Activated T-helper 1 cell treated with anti-CD3 and anti-CD28 coated beads, Interleukin-12 subunit alpha, Interleukin-12 subunit beta, Interleukin-2, Interleukin-4 antibody, amounts not matched to agents 30 ng/mL and 10 ng/mL and 1 ng/mL, durations not matched to agents 14 hours and 24 hours and 36 hours (primary cell): ENCODE measurements at regions of chr5 and their contacts with region 1.

Region 1: DNA sequence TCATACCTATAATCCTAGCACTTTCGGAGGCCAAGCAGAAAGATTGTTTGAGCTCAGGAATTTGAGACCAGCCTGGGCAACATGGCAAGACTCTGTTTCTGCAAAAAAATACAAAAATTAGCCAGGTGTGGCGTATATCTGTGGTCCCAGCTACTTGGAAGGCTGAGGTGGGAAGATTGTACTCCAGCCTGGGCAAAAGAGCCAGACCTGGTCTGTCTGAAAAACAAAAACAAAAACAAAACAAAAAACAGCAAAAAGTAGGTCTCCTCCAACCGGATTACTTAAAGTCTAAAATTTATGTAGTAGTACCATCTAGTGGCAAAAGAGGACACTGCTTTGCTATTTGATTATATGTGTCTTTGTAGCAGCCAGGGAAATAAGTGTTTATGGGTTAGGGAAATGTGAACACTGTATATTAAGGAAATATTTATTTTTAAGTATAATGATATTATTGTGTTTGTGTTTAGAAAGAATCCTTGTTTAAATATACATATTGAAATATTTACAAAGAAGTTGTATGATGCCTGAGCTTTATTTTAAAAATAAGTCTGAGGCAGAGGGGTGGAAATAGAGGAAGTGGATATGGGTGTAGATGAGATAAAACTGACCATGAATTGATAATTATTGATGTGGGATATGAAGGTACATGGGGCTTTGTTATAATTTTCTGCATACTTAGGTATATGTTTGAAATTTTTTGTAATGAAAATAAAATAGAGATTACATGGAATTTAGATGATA is 20.0 kb downstream of the APC start:
- DNase-seq: no peak
- H3K4me3 Mint-ChIP-seq: no peak overlapping the region
- H3K27ac Mint-ChIP-seq: no peak overlapping the region
- H3K4me1 Mint-ChIP-seq: peaks cover 4% of the 10 kb centered on the region
- H3K27me3 Mint-ChIP-seq: peaks cover 2% of the 10 kb centered on the region

Region 2: DNA sequence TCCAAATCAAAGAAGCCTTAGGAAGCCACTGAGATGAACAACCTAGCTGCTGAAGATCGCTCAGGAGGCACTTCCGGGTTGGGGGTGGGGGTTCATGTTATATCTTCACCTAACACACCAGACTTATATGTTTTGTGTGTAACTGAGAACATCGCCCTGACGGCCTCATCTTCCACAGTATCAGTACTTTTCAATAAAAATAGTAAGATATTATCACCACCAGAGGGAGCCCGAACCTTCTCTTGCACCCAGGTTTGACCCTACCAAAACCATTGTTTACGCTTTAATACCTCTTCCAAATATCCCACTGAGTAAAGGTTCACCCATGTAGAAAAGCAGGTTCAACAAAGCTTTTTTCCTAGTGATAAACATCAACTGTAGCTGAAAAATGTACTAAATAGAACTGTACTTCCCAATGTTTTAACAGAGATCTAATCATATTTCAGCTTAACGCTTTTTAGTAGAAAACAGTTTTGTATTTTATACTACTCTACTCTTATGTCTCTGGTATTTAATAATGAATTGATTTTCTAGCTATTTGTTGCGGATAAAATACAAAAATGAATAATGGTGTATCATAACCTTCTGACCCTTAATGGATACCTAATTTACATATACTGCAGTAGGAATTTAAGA is 582.6 kb before region 1 on chr5:
- intact Hi-C with region 1: loop called (anchors 1 kb)
- DNase-seq: no peak
- H3K4me3 Mint-ChIP-seq: no peak overlapping the region
- H3K27ac Mint-ChIP-seq: no peak overlapping the region
- H3K4me1 Mint-ChIP-seq: no peaks in the 10 kb centered on the region
- H3K27me3 Mint-ChIP-seq: peaks cover 19% of the 10 kb centered on the region

Region 3: DNA sequence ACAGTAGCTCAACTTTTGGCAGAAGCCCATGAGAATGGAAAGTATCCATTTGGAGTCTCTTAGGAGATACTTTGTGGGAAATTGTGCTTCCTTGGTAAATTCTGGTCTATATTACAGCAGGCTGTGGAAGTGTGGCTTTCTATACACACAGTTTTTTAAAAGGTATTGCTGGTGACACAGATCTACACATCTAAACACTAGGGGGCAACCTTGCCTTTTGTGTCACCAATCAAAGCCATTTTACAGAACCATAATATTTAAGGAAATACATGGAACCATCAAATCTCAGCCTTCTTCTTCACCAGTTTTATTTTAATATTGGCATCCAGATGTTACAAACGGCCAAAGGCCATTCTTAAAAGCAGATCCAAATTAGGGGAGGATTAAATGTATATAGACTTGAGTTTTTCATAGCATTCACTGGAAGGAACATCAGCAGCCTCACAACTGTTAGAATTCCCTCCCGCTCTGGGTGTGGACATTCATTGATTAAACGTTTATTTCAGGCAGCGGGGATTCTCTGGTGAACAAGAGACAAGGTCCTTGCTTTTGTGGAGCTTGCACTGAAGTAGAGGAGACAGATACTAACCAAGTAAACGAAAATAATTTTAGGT is 206.1 kb before region 1 on chr5:
- intact Hi-C with region 1: loop called (anchors 1 kb)
- DNase-seq: peak; percentile 14
- H3K4me3 Mint-ChIP-seq: no peak overlapping the region
- H3K27ac Mint-ChIP-seq: no peak overlapping the region
- H3K4me1 Mint-ChIP-seq: no peaks in the 10 kb centered on the region
- H3K27me3 Mint-ChIP-seq: peaks cover 15% of the 10 kb centered on the region

Region 4: DNA sequence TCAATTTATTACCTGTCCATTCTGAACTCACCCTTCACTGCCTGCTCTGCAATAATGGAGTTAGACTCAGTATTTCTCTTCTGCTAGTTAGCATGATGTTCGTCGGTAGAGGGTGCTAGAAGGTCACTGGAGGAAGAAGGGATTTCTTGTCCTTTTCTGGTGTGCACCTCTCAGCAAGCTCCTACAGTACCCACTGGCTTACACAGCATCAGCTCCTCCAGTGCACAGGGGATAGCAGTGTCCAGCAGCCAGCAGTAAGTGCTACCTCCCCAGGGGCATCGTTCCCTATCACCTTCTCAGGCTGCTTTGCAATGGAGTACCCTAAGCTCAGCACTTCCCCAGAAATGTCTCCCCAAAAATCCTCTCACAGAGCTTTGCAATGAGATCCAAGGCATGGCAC is 65.9 kb before region 1 on chr5:
- intact Hi-C with region 1: loop called (anchors 1 kb)
- DNase-seq: peak; percentile 13
- H3K4me3 Mint-ChIP-seq: no peak overlapping the region
- H3K27ac Mint-ChIP-seq: no peak overlapping the region
- H3K4me1 Mint-ChIP-seq: no peaks in the 10 kb centered on the region
- H3K27me3 Mint-ChIP-seq: peaks cover 36% of the 10 kb centered on the region

Region 5: GRCh38 chr5:112737463-112738190 is 20.0 kb before region 1 on chr5 and contains the start of gene APC:
- intact Hi-C with region 1: loop called (anchors 2 kb)
- DNase-seq: peak; percentile 72
- H3K4me3 Mint-ChIP-seq: peak within 1 kb of the TSS; percentile 89
- H3K27ac Mint-ChIP-seq: peak within 1 kb of the TSS; percentile 19
- H3K4me1 Mint-ChIP-seq: peaks cover 17% of the 10 kb centered on the region
- H3K27me3 Mint-ChIP-seq: peaks cover 2% of the 10 kb centered on the region
- total RNA-seq, gene APC: 20.3 and 24.4 TPM in 2 replicates